Naive thymus-derived CD4-positive, alpha-beta T cell (primary cell): ENCODE measurements at regions of chr10 and their contacts with region 1.

Region 1: DNA sequence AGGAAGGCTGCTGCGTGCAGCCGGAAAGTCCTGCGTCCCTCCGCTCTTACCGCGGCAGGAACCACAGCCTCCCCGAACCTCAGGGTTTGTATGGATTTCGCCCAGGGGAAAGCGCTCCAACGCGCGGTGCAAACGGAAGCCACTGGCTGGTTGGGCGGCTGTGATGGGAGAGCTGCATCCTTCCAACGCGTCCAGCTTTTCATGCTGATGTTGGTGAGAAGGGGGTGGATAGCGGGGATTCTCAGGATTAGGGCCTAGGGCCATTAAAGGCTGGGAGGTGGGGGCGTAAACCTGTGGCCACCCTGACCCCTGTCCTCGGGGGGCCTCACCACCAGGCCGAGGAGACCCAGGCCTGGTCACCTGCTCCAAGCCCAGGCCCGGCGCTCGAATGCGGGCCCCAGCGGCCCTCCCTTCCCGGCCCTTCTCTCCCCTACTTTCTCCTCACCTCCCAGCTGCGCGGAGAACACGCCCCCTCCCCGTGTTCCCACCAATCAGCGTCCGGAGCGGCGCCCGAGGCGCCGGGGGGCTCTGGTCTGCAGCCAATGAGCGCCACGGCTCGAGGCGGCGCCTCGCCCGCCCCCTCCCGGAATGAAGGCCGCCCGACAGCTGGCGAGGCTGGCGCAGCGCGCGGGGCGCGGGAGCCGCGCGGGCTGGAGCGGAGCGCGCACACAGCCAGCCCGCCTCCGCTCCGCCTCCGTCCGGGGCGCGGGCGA is 458 bp upstream of the NANOS1 start:
- DNase-seq: peak; percentile 50 to 81 (median 60)
- ATAC-seq: peak; percentile 85
- H3K4me3 ChIP-seq: peak overlapping the region; percentile 43
- H3K4me3 Mint-ChIP-seq: peak overlapping the region; percentile 59 to 87 (median 78)
- H3K27ac ChIP-seq: no peak overlapping the region
- H3K27ac Mint-ChIP-seq: peak overlapping the region in 3 of 9 donors; percentile 17 to 65 (median 55)
- H3K4me1 ChIP-seq: no peaks in the 10 kb centered on the region
- H3K4me1 Mint-ChIP-seq: peaks cover 6 to 24% (median 10%) of the 10 kb centered on the region in 7 donors
- H3K27me3 ChIP-seq: no peaks in the 10 kb centered on the region
- H3K27me3 Mint-ChIP-seq: peaks cover 0 to 12% (median 0%) of the 10 kb centered on the region in 5 donors

Region 2: GRCh38 chr10:117300671-117301070 is 1728.4 kb before region 1 on chr10:
- CTCF ChIA-PET with region 1: no interaction called
- POLR2A ChIA-PET with region 1: no interaction called
- intact Hi-C with region 1: no loop called
- DNase-seq: no peak
- ATAC-seq: no peak
- H3K4me3 ChIP-seq: no peak overlapping the region
- H3K4me3 Mint-ChIP-seq: no peak overlapping the region
- H3K27ac ChIP-seq: no peak overlapping the region
- H3K27ac Mint-ChIP-seq: no peak overlapping the region
- H3K4me1 ChIP-seq: no peaks in the 10 kb centered on the region
- H3K4me1 Mint-ChIP-seq: peaks cover 0 to 11% (median 3%) of the 10 kb centered on the region in 7 donors
- H3K27me3 ChIP-seq: no peaks in the 10 kb centered on the region
- H3K27me3 Mint-ChIP-seq: no peaks in the 10 kb centered on the region

Region 3: GRCh38 chr10:119006451-119007210 is 22.4 kb before region 1 on chr10:
- CTCF ChIA-PET with region 1: no interaction called
- POLR2A ChIA-PET with region 1: no interaction called
- intact Hi-C with region 1: no loop called
- DNase-seq: no peak
- ATAC-seq: no peak
- H3K4me3 ChIP-seq: no peak overlapping the region
- H3K4me3 Mint-ChIP-seq: no peak overlapping the region
- H3K27ac ChIP-seq: no peak overlapping the region
- H3K27ac Mint-ChIP-seq: no peak overlapping the region
- H3K4me1 ChIP-seq: no peaks in the 10 kb centered on the region
- H3K4me1 Mint-ChIP-seq: no peaks in the 10 kb centered on the region
- H3K27me3 ChIP-seq: no peaks in the 10 kb centered on the region
- H3K27me3 Mint-ChIP-seq: peaks cover 7 to 22% (median 15%) of the 10 kb centered on the region in 5 donors

Region 4: DNA sequence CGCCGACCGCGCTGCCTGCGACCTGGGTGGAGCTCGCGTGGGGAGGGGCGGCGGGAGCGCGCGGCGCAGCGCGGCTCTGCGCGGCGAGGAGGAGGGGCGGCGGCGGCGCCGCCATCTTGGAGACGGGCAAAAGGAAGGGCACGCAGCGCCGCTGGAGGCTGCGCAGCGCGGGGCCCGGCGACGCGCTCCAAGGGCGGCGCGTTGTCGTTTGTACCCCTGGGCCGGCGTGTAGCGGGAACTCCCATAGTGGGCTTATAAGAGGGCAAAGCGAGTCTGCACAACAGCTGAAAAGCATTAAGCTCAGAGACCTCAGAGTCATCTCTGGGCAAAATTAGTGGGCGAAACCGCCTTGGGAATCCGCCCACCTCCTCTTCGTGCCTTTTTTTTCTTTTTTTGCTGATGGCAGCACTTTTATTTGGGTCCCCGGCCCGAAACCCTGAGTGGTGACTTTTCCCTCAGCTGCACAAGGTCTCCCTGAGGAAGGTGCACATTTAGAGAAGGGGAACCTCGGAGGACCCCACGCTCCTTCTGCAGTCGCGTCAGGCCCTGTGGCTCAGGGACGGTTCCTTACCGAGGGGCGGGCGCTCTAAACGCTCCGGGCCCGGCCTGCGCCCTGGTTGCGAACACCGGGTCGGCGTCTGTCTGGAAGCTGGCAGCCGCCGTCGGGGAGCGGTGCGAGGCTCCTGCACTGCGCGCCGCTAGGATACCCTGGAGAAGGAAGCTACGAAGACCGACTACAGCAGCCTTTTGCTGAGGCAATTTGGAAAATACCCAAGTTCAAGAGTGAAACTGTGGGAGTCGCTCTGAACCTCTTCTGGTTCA is 844.0 kb after region 1 on chr10:
- CTCF ChIA-PET with region 1: no interaction called
- POLR2A ChIA-PET with region 1: no interaction called
- intact Hi-C with region 1: loop called in 1 of 2 experiments (anchors 2 kb)
- DNase-seq: peak; percentile 81 to 88 (median 86)
- ATAC-seq: peak; percentile 96
- H3K4me3 ChIP-seq: peak overlapping the region; percentile 97
- H3K4me3 Mint-ChIP-seq: peak overlapping the region; percentile 82 to 92 (median 89)
- H3K27ac ChIP-seq: peak overlapping the region; percentile 84
- H3K27ac Mint-ChIP-seq: peak overlapping the region; percentile 79 to 95 (median 92)
- H3K4me1 ChIP-seq: peaks cover 21 to 28% of the 10 kb centered on the region in 2 donors
- H3K4me1 Mint-ChIP-seq: peaks cover 23 to 46% (median 41%) of the 10 kb centered on the region in 7 donors
- H3K27me3 ChIP-seq: no peaks in the 10 kb centered on the region
- H3K27me3 Mint-ChIP-seq: peaks cover 0 to 6% (median 0%) of the 10 kb centered on the region in 5 donors